ENCODE measurements at regions of chr17 and their contacts with region 1.

Region 1: DNA sequence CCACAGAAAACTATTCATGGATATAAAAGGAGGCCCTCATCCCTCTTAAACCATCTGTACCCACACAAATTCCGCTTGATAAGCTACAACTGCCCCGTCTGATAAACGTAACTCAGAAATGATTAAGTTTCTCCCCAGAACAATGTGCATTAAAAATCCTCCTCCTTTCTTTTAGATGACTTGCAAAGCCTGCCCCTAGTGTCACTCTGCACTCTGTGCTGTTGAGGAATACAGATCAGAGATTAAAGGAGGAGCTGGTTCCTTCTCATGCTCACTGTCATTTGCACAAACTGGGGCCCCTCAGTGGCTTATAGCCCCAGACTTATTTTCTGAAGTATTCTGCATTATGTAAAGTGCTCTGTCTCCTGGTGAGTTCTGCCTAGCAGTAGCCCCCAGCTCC is 33.3 kb downstream of the CDRT15 start:
- DNase-seq: peak in 7 of 9 donors; percentile 51 to 72 (median 64)
- ATAC-seq: peak; percentile 59
- H3K4me3 ChIP-seq: no peak overlapping the region
- H3K4me3 Mint-ChIP-seq: peak overlapping the region; percentile 18 to 72 (median 58)
- H3K27ac ChIP-seq: peak overlapping the region; percentile 45
- H3K27ac Mint-ChIP-seq: peak overlapping the region; percentile 86 to 96 (median 94)
- H3K4me1 ChIP-seq: peaks cover 80 to 81% of the 10 kb centered on the region in 2 donors
- H3K4me1 Mint-ChIP-seq: peaks cover 76 to 95% (median 84%) of the 10 kb centered on the region in 7 donors
- H3K27me3 ChIP-seq: no peaks in the 10 kb centered on the region
- H3K27me3 Mint-ChIP-seq: no peaks in the 10 kb centered on the region

Region 2: GRCh38 chr17:13017659-13018459 is 1185.5 kb before region 1 on chr17 and contains the start of gene ELAC2:
- CTCF ChIA-PET with region 1: no interaction called
- POLR2A ChIA-PET with region 1: no interaction called
- intact Hi-C with region 1: loop called in 1 of 2 experiments (anchors 5 kb)
- DNase-seq: peak; percentile 86 to 98 (median 95)
- ATAC-seq: peak; percentile 100
- H3K4me3 ChIP-seq: peak within 1 kb of the TSS; percentile 77
- H3K4me3 Mint-ChIP-seq: peak within 1 kb of the TSS; percentile 90 to 99 (median 96)
- H3K27ac ChIP-seq: peak within 1 kb of the TSS; percentile 78
- H3K27ac Mint-ChIP-seq: peak within 1 kb of the TSS; percentile 85 to 99 (median 97)
- H3K4me1 ChIP-seq: peaks cover 6 to 16% of the 10 kb centered on the region in 2 donors
- H3K4me1 Mint-ChIP-seq: peaks cover 18 to 48% (median 35%) of the 10 kb centered on the region in 7 donors
- H3K27me3 ChIP-seq: no peaks in the 10 kb centered on the region
- H3K27me3 Mint-ChIP-seq: no peaks in the 10 kb centered on the region
- total RNA-seq, gene ELAC2: 65.2 to 78.9 (median 75.3) TPM

Region 3: GRCh38 chr17:13907581-13907980 is 295.8 kb before region 1 on chr17:
- CTCF ChIA-PET with region 1: no interaction called
- POLR2A ChIA-PET with region 1: no interaction called
- intact Hi-C with region 1: no loop called
- DNase-seq: no peak
- ATAC-seq: no peak
- H3K4me3 ChIP-seq: no peak overlapping the region
- H3K4me3 Mint-ChIP-seq: no peak overlapping the region
- H3K27ac ChIP-seq: no peak overlapping the region
- H3K27ac Mint-ChIP-seq: no peak overlapping the region
- H3K4me1 ChIP-seq: no peaks in the 10 kb centered on the region
- H3K4me1 Mint-ChIP-seq: no peaks in the 10 kb centered on the region
- H3K27me3 ChIP-seq: no peaks in the 10 kb centered on the region
- H3K27me3 Mint-ChIP-seq: no peaks in the 10 kb centered on the region

Region 4: GRCh38 chr17:14052886-14053615 is 150.3 kb before region 1 on chr17:
- CTCF ChIA-PET with region 1: no interaction called
- POLR2A ChIA-PET with region 1: no interaction called
- intact Hi-C with region 1: no loop called
- DNase-seq: no peak
- ATAC-seq: no peak
- H3K4me3 ChIP-seq: no peak overlapping the region
- H3K4me3 Mint-ChIP-seq: no peak overlapping the region
- H3K27ac ChIP-seq: no peak overlapping the region
- H3K27ac Mint-ChIP-seq: no peak overlapping the region
- H3K4me1 ChIP-seq: no peaks in the 10 kb centered on the region
- H3K4me1 Mint-ChIP-seq: peaks cover 0 to 25% (median 5%) of the 10 kb centered on the region in 7 donors
- H3K27me3 ChIP-seq: no peaks in the 10 kb centered on the region
- H3K27me3 Mint-ChIP-seq: no peaks in the 10 kb centered on the region

Region 5: GRCh38 chr17:14069251-14070021 is 134.0 kb before region 1 on chr17 and contains the start of gene COX10:
- CTCF ChIA-PET with region 1: interaction called, 10 read pairs
- POLR2A ChIA-PET with region 1: interaction called, 5 read pairs
- intact Hi-C with region 1: loop called (anchors 1 kb)
- DNase-seq: peak; percentile 71 to 93 (median 78)
- ATAC-seq: peak; percentile 99
- H3K4me3 ChIP-seq: peak within 1 kb of the TSS; percentile 83
- H3K4me3 Mint-ChIP-seq: peak within 1 kb of the TSS; percentile 91 to 98 (median 94)
- H3K27ac ChIP-seq: peak within 1 kb of the TSS; percentile 89
- H3K27ac Mint-ChIP-seq: peak within 1 kb of the TSS; percentile 77 to 97 (median 92)
- H3K4me1 ChIP-seq: peaks cover 7 to 22% of the 10 kb centered on the region in 2 donors
- H3K4me1 Mint-ChIP-seq: peaks cover 29 to 59% (median 49%) of the 10 kb centered on the region in 7 donors
- H3K27me3 ChIP-seq: no peaks in the 10 kb centered on the region
- H3K27me3 Mint-ChIP-seq: no peaks in the 10 kb centered on the region
- total RNA-seq, gene COX10: 16.2 to 30.6 (median 19.3) TPM

Region 6: DNA sequence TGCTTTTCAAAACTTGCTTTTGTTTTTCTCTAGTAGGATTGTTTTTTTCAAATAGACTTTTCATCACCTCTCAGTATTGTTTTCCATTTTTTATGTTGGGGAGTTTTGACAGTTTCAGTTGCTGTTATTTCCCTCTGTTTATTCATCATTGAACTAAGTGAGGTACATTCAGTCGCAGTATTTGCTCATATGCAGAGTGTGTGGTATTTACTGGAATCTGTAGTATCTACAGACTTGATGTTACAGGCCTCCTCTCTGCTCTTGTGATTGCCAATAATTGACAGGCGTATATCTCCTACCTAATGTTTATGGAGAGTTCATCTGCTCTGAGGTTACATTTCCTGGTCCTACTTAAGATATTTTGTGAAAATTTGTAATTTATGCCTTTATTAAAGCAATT is 84.4 kb before region 1 on chr17:
- CTCF ChIA-PET with region 1: no interaction called
- POLR2A ChIA-PET with region 1: no interaction called
- intact Hi-C with region 1: loop called (anchors 1 kb)
- DNase-seq: peak in 3 of 9 donors; percentile 11 to 48 (median 40)
- ATAC-seq: peak; percentile 79
- H3K4me3 ChIP-seq: no peak overlapping the region
- H3K4me3 Mint-ChIP-seq: peak overlapping the region in 5 of 10 donors; percentile 4 to 71 (median 8)
- H3K27ac ChIP-seq: no peak overlapping the region
- H3K27ac Mint-ChIP-seq: peak overlapping the region; percentile 65 to 96 (median 74)
- H3K4me1 ChIP-seq: peaks cover 0 to 7% of the 10 kb centered on the region in 2 donors
- H3K4me1 Mint-ChIP-seq: peaks cover 40 to 89% (median 75%) of the 10 kb centered on the region in 7 donors
- H3K27me3 ChIP-seq: no peaks in the 10 kb centered on the region
- H3K27me3 Mint-ChIP-seq: no peaks in the 10 kb centered on the region

Region 7: DNA sequence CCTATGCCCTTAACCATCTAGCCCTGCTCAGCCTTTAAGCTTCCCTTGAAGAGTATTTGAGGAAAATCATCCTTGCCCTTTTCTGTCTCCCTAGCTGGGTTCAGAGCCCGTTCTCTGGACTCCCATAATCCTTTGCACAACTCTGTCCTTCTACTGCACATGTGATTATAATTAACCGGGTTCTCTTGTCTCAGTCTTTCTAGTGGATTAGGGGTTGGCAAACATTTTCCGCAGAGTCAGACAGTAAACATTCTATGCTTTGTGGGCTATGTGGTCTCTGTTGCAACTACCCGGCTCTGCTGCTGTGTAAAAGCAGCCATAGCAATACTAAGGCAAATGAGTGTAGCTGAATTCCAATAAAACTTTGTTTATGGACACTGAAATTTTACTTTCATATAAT is 46.7 kb before region 1 on chr17:
- CTCF ChIA-PET with region 1: no interaction called
- POLR2A ChIA-PET with region 1: interaction called, 3 read pairs
- intact Hi-C with region 1: loop called in 1 of 2 experiments (anchors 10 kb)
- DNase-seq: no peak
- ATAC-seq: no peak
- H3K4me3 ChIP-seq: no peak overlapping the region
- H3K4me3 Mint-ChIP-seq: no peak overlapping the region
- H3K27ac ChIP-seq: no peak overlapping the region
- H3K27ac Mint-ChIP-seq: peak overlapping the region in 2 of 9 donors; percentile 54 to 56
- H3K4me1 ChIP-seq: no peaks in the 10 kb centered on the region
- H3K4me1 Mint-ChIP-seq: peaks cover 6 to 36% (median 25%) of the 10 kb centered on the region in 7 donors
- H3K27me3 ChIP-seq: no peaks in the 10 kb centered on the region
- H3K27me3 Mint-ChIP-seq: no peaks in the 10 kb centered on the region

Region 8: DNA sequence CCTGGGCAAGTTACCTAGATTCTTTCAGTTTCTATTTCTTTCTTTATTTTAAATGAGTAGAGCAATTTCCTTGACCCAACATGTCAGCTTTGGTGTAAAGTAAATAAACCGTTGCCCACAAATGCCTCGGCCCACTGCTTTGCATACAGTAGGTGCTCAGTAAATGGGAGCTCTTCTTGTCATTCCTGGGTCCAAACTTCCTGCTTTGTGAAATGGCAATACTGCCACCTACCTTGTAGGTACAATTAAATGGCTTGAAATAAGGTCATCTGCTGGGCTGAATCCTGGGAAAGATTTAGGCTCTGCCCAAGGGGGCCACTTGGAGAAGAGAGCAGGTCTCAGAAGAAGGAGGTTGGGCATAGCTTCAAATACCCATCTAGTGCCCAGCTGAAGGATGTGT is 350.5 kb after region 1 on chr17:
- CTCF ChIA-PET with region 1: no interaction called
- POLR2A ChIA-PET with region 1: no interaction called
- intact Hi-C with region 1: loop called in 1 of 2 experiments (anchors 5 kb)
- DNase-seq: no peak
- ATAC-seq: no peak
- H3K4me3 ChIP-seq: no peak overlapping the region
- H3K4me3 Mint-ChIP-seq: no peak overlapping the region
- H3K27ac ChIP-seq: no peak overlapping the region
- H3K27ac Mint-ChIP-seq: peak overlapping the region in 1 of 9 donors; percentile 14
- H3K4me1 ChIP-seq: no peaks in the 10 kb centered on the region
- H3K4me1 Mint-ChIP-seq: peaks cover 0 to 13% (median 6%) of the 10 kb centered on the region in 7 donors
- H3K27me3 ChIP-seq: no peaks in the 10 kb centered on the region
- H3K27me3 Mint-ChIP-seq: peaks cover 0 to 1% (median 0%) of the 10 kb centered on the region in 5 donors

Region 9: DNA sequence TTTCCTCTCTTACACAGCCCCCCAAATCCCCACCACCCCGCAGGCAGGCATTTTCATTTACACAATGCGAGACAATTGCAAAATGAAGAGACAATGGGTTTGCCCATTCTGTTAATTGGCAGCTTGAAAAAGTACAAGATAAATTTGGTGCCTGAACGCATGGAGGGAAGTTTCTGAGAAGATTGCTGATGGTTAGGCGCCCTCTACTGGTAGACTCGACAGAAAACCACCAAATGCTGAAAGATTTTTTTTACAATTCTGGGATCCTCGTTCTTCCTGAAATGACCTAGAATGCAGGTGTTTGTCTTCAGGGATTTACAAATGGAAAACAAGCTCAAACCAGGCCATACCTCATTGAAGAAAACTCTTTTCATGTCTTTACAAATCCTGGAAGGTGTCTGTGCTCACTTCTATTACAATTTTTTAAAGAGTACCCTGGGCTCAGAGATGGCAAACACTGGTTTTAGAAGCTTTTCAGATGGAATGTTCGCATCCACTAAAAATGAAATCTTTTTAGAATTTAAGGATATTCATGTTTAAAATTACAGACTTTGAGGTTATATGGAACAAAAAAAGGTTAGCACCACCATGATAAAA is 723.2 kb after region 1 on chr17:
- CTCF ChIA-PET with region 1: no interaction called
- POLR2A ChIA-PET with region 1: no interaction called
- intact Hi-C with region 1: loop called in 1 of 2 experiments (anchors 5 kb)
- DNase-seq: peak; percentile 7 to 66 (median 44)
- ATAC-seq: peak; percentile 61
- H3K4me3 ChIP-seq: no peak overlapping the region
- H3K4me3 Mint-ChIP-seq: no peak overlapping the region
- H3K27ac ChIP-seq: no peak overlapping the region
- H3K27ac Mint-ChIP-seq: no peak overlapping the region
- H3K4me1 ChIP-seq: no peaks in the 10 kb centered on the region
- H3K4me1 Mint-ChIP-seq: no peaks in the 10 kb centered on the region
- H3K27me3 ChIP-seq: no peaks in the 10 kb centered on the region
- H3K27me3 Mint-ChIP-seq: peaks cover 0 to 23% (median 15%) of the 10 kb centered on the region in 5 donors

Region 10: DNA sequence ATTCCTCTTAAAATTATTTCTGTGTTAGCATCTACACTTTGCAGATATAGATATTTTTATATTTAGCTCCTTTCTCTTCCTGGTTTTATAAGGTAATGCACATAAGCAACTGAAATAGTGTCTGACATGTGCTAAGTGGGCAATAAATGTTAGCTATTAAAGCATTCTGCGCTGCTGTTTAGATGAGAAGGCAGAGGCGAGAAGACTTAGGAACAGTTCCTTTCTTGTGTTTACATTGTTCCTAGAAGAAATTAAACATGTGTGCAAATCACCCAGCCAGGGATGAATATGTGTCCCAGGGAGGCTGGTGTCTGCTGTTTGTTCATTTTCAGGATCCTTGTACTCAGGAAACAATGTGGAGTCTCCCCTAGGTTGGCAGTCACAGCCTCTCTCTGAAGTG is 769.5 kb after region 1 on chr17:
- CTCF ChIA-PET with region 1: no interaction called
- POLR2A ChIA-PET with region 1: no interaction called
- intact Hi-C with region 1: no loop called
- DNase-seq: no peak
- ATAC-seq: no peak
- H3K4me3 ChIP-seq: no peak overlapping the region
- H3K4me3 Mint-ChIP-seq: no peak overlapping the region
- H3K27ac ChIP-seq: no peak overlapping the region
- H3K27ac Mint-ChIP-seq: no peak overlapping the region
- H3K4me1 ChIP-seq: no peaks in the 10 kb centered on the region
- H3K4me1 Mint-ChIP-seq: peaks cover 0 to 5% (median 0%) of the 10 kb centered on the region in 7 donors
- H3K27me3 ChIP-seq: peaks cover 0 to 4% of the 10 kb centered on the region in 2 donors
- H3K27me3 Mint-ChIP-seq: peaks cover 0 to 35% (median 20%) of the 10 kb centered on the region in 5 donors